Right ventricle myocardium inferior (tissue), 1 donor: ENCODE measurements at regions of chr19 and their contacts with region 1.

Region 1: GRCh38 chr19:44845612-44846454 is at the start of gene NECTIN2:
- DNase-seq: peak; percentile 100
- ATAC-seq: peak; percentile 86
- total RNA-seq, gene NECTIN2: 41.8 TPM

Region 2: GRCh38 chr19:44689056-44689895 is 156.6 kb before region 1 on chr19:
- intact Hi-C with region 1: loop called (anchors 2 kb)
- DNase-seq: peak; percentile 85
- ATAC-seq: peak; percentile 65

Region 3: DNA sequence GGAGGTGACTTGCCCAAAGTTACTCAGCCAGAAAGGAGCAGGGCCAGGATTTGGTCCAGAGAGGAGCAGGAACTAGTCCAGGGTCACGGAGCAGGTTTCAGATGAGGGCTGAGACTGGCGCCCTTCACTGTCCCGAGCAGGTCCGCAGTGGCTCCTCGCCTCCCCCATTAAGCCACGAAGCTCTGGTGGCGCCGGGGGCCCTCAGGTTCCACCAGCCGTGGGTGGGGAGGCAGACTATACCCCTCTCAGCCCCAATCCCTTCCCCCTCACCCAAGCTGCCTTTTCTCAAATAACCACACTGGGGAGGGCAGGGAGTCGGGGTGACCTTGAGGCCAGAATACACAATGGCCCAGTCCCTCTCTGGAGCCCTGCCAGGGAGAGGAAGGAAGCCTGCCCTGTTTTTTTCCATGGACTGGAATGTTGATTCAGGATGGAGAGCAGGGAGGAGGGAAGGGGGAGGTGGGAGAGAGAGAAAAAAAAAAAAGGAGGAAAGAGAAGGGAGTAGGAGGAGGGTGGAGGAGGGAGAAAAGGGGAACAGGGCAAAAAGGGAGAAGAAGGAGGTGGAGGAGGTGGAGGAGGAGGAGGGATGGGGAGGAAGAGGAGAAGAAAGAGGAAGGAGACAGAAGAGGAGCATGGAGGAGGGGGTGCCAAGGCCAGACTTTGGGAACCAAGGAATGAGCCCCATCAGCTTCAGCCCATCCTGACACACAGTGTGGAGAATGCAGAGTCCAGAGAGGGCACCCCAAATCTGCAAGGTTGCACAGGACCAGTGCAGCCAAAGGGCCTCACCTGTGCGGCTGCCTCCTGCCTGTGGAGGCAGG is 127.2 kb before region 1 on chr19:
- intact Hi-C with region 1: loop called (anchors 5 kb)
- DNase-seq: peak; percentile 85
- ATAC-seq: peak; percentile 75

Region 4: GRCh38 chr19:44782729-44783128 is 63.1 kb before region 1 on chr19:
- intact Hi-C with region 1: loop called (anchors 1 kb)
- DNase-seq: no peak
- ATAC-seq: no peak

Region 5: GRCh38 chr19:44800461-44800860 is 45.4 kb before region 1 on chr19:
- intact Hi-C with region 1: loop called (anchors 1 kb)
- DNase-seq: peak; percentile 93
- ATAC-seq: peak; percentile 92

Region 6: DNA sequence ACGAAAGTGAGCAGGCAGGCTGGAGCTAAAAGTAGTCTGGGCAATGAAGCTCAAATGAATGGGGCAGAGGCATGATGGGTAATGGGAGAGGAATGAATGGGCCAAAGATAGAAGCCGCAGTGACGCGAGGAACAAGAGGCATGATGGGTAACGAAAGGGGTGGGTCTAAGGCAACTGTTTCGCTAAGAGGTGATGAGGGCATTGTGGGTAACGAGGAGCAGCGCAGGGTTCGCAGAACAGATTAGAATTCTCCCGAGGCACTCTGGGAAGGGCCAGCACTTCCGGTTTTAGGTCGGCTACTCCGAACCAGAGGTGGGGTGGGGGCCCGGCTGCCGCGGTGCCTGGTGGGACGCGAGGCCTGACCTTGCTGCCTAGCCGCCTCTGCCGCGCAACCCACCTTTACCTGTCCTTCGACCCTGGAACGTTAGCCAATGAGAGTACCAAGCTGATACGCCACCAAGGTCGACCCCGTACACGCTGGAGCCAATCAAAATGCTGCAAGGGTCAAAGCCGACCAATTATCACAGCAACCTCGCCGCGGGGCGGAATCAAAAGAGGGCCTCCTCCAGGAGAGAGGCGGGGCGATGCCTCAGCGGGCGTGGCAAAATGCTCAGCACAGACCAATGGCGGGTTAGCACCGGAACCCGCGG is 44.7 kb after region 1 on chr19:
- intact Hi-C with region 1: loop called (anchors 2 kb)
- DNase-seq: no peak
- ATAC-seq: peak; percentile 93